ENCODE measurements at regions of chr17 and their contacts with region 1.

Region 1: DNA sequence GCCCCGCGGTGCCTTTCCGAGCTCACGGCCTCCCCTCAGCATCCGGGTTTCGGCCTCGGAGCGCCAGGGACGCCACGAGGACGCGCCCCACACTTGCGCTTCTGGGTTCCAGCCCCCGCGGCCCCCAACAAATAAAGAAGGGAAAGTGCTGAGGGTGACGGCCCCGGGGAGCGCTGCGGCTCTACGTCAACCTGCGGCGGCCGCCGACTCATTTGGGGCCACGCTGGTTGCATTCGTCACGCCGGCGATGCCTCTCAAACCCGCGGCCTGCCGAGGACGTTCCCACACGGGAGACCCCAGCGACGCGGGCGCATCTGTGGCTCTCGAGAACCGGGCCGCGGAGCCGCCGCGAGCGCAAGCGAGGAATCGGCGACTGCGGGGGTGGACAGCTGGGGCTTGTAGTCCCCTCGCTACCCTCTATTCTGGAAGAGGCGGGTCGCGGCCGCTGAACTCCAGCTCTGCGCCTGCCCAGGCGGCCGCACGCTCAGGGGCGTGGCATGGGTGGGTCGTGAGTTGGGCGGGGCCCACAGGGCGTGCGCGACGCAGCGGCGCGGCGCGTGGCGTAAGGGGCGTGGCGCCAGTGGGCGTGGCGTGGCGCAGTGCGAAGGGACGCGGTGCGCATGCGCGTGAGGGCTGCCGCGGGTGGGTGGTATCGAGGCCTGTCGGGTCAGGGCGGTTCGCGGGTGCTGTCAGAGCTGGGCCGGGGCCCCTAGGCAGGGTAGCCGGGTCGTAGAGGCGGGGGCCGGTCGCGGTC is at the start of gene AMZ2:
- DNase-seq: peak; percentile 81
- H3K4me3 ChIP-seq: peak within 1 kb of the TSS; percentile 79
- H3K27ac ChIP-seq: peak within 1 kb of the TSS; percentile 89
- H3K27me3 ChIP-seq: no peaks in the 10 kb centered on the region
- CTCF ChIP-seq: no peak
- polyA plus RNA-seq, gene AMZ2: 89.8 and 112 TPM in 2 replicates

Region 2: GRCh38 chr17:68228817-68229572 is 18.6 kb before region 1 on chr17:
- CTCF ChIA-PET with region 1: interaction called, 10 read pairs
- POLR2A ChIA-PET with region 1: no interaction called
- DNase-seq: no peak
- H3K4me3 ChIP-seq: no peak overlapping the region
- H3K27ac ChIP-seq: no peak overlapping the region
- H3K27me3 ChIP-seq: no peaks in the 10 kb centered on the region
- CTCF ChIP-seq: no peak

Region 3: DNA sequence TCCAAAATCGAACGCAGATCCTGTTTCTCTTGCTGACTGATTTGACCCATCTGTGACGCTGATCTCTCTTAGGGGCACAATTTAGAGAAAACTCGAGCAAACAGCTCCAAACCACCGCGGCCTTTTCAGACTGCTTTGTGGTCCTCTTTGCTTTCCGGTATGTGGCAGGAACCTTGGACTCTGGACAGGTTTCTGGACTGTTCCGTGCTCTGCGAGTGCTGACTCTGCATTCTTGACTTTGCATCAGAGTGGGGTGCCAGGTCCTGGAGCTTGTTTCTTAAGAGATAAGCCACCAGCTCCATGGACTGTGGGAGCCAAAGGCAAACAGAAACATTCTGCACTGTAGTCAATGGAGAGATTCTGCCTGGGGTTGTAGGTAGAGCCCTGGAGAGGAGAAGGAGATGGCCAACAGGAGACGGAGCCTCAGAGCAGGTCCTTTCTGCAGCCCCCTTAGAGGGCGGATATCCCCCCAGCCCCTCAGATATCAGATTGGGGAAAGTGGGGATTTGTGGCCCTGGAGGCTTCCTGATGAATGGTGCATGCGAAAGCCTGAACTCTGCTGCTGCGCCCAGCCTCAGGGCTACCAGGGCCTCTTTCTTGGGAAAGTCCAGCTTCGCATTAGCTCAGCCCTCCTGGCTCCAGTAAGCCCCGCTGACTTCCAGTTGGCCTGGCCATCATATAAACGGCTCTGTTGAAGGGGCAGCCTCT is 144.1 kb after region 1 on chr17:
- CTCF ChIA-PET with region 1: no interaction called
- POLR2A ChIA-PET with region 1: no interaction called
- DNase-seq: no peak
- H3K4me3 ChIP-seq: no peak overlapping the region
- H3K27ac ChIP-seq: no peak overlapping the region
- H3K27me3 ChIP-seq: no peaks in the 10 kb centered on the region
- CTCF ChIP-seq: no peak